Natural killer cell (primary cell): ENCODE measurements at regions of chr4 and their contacts with region 1.

Region 1: DNA sequence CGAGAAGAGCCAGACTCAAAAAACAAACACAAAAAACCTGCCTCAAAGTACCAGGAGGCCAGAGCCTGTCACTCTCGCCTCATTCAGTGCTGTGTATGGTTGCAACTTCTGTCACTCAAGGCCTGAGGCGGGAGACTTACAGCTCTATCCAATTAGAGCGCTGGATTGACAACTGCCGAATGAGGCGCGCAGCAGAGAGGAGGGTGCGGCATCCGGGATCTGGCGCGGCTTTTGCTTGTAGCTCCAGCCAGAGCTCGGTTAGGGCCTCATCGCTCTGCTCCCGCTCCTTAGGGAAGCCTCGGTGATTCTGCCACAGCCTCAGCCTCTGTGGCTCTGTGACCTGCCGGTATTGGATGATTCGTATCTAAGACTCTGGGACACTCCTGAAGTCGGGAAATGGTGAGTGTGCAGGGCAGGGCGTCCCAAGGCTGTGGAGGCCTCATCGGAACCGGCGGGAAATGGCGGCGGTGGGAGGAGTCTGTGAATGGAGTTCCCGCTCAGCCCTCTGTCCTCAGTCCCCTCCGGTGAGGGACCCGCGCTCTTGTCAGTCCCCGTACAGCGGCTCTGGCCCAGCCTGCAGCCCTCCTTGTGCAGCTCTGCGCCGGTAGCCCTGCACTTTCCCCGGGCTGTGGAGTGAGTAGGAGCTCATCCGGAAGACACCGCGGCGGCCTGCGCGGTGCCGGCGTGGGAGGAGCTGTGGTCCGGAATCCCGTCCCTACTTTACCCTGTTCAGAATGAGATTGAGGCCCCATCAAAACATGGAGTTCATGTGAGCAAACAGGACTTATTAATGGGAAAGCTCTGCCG is at the start of gene ZNF718:
- DNase-seq: peak; percentile 87 to 96
- ATAC-seq: peak; percentile 86 to 96 (median 89)
- H3K4me3 ChIP-seq: peak within 1 kb of the TSS; percentile 74
- H3K4me3 Mint-ChIP-seq: peak within 1 kb of the TSS; percentile 99
- H3K27ac ChIP-seq: peak within 1 kb of the TSS; percentile 78
- H3K27ac Mint-ChIP-seq: peak within 1 kb of the TSS; percentile 99
- H3K4me1 ChIP-seq: peaks cover 57% of the 10 kb centered on the region
- H3K4me1 Mint-ChIP-seq: peaks cover 53 to 54% of the 10 kb centered on the region in 2 donors
- H3K27me3 ChIP-seq: no peaks in the 10 kb centered on the region
- H3K27me3 Mint-ChIP-seq: no peaks in the 10 kb centered on the region
- CTCF ChIP-seq: no peak
- total RNA-seq, gene ZNF718: 7.9 to 16.1 (median 15.1) TPM

Region 2: DNA sequence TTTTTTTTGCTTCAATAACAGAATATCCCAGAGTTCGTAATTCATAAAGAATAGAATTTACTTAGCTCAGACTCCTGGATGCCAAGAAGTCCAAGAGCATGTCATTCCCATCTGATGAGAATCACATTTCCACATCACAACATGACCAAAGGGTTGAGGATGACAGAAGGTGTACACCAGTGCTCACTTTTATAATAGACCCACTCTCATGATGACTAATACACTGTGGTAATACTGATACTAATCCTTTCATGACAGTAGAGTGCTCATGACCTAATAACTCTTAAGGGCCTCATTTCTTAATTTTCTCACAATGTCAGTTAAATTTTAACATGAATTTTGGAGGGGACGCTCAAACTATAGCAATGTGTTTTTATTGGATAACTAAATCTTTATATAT is 111.5 kb after region 1 on chr4:
- intact Hi-C with region 1: loop called (anchors 1 kb)
- DNase-seq: no peak
- ATAC-seq: peak in 1 of 3 donors; percentile 50
- H3K4me3 ChIP-seq: no peak overlapping the region
- H3K4me3 Mint-ChIP-seq: no peak overlapping the region
- H3K27ac ChIP-seq: no peak overlapping the region
- H3K27ac Mint-ChIP-seq: no peak overlapping the region
- H3K4me1 ChIP-seq: peaks cover 8% of the 10 kb centered on the region
- H3K4me1 Mint-ChIP-seq: peaks cover 23 to 46% of the 10 kb centered on the region in 2 donors
- H3K27me3 ChIP-seq: no peaks in the 10 kb centered on the region
- H3K27me3 Mint-ChIP-seq: no peaks in the 10 kb centered on the region
- CTCF ChIP-seq: no peak